Activated CD4-positive, alpha-beta memory T cell treated with anti-CD3 and anti-CD28 coated beads for 36 hours (primary cell): ENCODE measurements at regions of chr15 and their contacts with region 1.

Region 1: GRCh38 chr15:74540761-74541493 is at the start of gene ARID3B:
- DNase-seq: peak; percentile 99
- H3K4me3 Mint-ChIP-seq: peak within 1 kb of the TSS; percentile 99
- H3K27ac Mint-ChIP-seq: peak within 1 kb of the TSS; percentile 95
- H3K4me1 Mint-ChIP-seq: peaks cover 48% of the 10 kb centered on the region
- H3K27me3 Mint-ChIP-seq: no peaks in the 10 kb centered on the region
- total RNA-seq, gene ARID3B: 27.3 to 28.6 TPM

Region 2: GRCh38 chr15:73991726-73992593 is 549.0 kb before region 1 on chr15 and contains the start of gene STOML1:
- CTCF ChIA-PET with region 1: no interaction called
- POLR2A ChIA-PET with region 1: interaction called, 3 read pairs
- intact Hi-C with region 1: loop called (anchors 5 kb)
- DNase-seq: peak; percentile 97
- H3K4me3 Mint-ChIP-seq: peak within 1 kb of the TSS; percentile 80
- H3K27ac Mint-ChIP-seq: peak within 1 kb of the TSS; percentile 70
- H3K4me1 Mint-ChIP-seq: peaks cover 30% of the 10 kb centered on the region
- H3K27me3 Mint-ChIP-seq: no peaks in the 10 kb centered on the region
- total RNA-seq, gene STOML1: 7.1 to 10.1 TPM

Region 3: GRCh38 chr15:74011610-74012009 is 529.3 kb before region 1 on chr15:
- CTCF ChIA-PET with region 1: no interaction called
- POLR2A ChIA-PET with region 1: no interaction called
- intact Hi-C with region 1: loop called (anchors 5 kb)
- DNase-seq: no peak
- H3K4me3 Mint-ChIP-seq: no peak overlapping the region
- H3K27ac Mint-ChIP-seq: no peak overlapping the region
- H3K4me1 Mint-ChIP-seq: peaks cover 51% of the 10 kb centered on the region
- H3K27me3 Mint-ChIP-seq: no peaks in the 10 kb centered on the region

Region 4: GRCh38 chr15:74402873-74403587 is 137.9 kb before region 1 on chr15:
- CTCF ChIA-PET with region 1: interaction called, 4 read pairs
- POLR2A ChIA-PET with region 1: interaction called, 8 read pairs
- intact Hi-C with region 1: loop called (anchors 2 kb)
- DNase-seq: peak; percentile 95
- H3K4me3 Mint-ChIP-seq: peak overlapping the region; percentile 28
- H3K27ac Mint-ChIP-seq: peak overlapping the region; percentile 85
- H3K4me1 Mint-ChIP-seq: peaks cover 73% of the 10 kb centered on the region
- H3K27me3 Mint-ChIP-seq: no peaks in the 10 kb centered on the region

Region 5: GRCh38 chr15:74552773-74553441 is 12.0 kb after region 1 on chr15:
- CTCF ChIA-PET with region 1: interaction called, 5 read pairs
- POLR2A ChIA-PET with region 1: interaction called, 16 read pairs
- intact Hi-C with region 1: no loop called
- DNase-seq: no peak
- H3K4me3 Mint-ChIP-seq: no peak overlapping the region
- H3K27ac Mint-ChIP-seq: peak overlapping the region; percentile 58
- H3K4me1 Mint-ChIP-seq: peaks cover 42% of the 10 kb centered on the region
- H3K27me3 Mint-ChIP-seq: no peaks in the 10 kb centered on the region

Region 6: GRCh38 chr15:74598126-74598842 is 57.4 kb after region 1 on chr15:
- CTCF ChIA-PET with region 1: interaction called, 5 read pairs
- POLR2A ChIA-PET with region 1: interaction called, 3 read pairs
- intact Hi-C with region 1: loop called (anchors 1 kb)
- DNase-seq: peak; percentile 95
- H3K4me3 Mint-ChIP-seq: peak overlapping the region; percentile 96
- H3K27ac Mint-ChIP-seq: peak overlapping the region; percentile 94
- H3K4me1 Mint-ChIP-seq: peaks cover 20% of the 10 kb centered on the region
- H3K27me3 Mint-ChIP-seq: no peaks in the 10 kb centered on the region

Region 7: DNA sequence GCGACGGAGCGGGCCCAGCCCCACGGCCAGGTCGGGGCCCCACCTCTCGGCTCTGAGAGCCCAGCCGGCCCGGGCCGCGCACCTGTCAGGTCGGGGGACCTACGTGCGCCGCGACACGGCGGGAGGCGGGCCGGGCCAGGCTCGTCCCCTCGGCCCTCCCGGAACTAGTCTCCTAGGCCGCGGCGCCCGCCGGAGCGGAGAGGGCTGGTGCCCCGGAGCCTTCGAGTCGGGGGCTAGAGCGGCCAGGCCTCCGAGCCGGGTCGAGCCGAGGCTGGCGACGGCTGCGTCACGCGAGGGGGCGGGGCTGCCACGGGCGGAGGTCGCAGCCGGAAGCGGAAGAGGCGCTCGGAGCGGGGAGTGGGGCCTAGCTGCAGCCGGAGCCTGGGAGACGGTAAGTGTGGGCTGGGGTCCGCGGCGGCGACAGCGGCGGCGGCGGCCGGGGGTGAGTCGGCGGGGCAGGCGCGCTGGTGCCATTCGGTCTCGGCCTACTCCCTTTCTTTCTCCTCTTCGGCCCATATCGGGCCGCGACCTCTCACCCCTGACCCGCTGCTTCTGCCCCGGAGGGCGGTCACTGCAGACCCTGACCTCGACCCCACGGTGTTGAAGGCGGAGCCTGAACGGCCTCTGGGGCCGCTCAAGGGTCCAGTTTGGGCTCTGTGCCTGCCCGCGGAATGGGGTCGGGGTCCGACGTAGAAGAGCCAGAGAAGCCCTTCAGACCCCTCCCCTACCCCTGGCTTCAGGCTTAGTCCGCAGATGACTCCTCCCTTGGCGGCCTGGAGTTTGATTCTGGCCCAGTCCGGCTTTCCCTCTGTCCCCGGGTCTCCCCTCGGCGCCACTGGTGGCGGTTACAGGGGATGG is 74.8 kb after region 1 on chr15 and contains the start of gene CLK3:
- CTCF ChIA-PET with region 1: interaction called, 8 read pairs
- POLR2A ChIA-PET with region 1: interaction called, 33 read pairs
- intact Hi-C with region 1: loop called (anchors 1 kb)
- DNase-seq: peak; percentile 97
- H3K4me3 Mint-ChIP-seq: peak within 1 kb of the TSS; percentile 91
- H3K27ac Mint-ChIP-seq: peak within 1 kb of the TSS; percentile 94
- H3K4me1 Mint-ChIP-seq: peaks cover 35% of the 10 kb centered on the region
- H3K27me3 Mint-ChIP-seq: no peaks in the 10 kb centered on the region
- total RNA-seq, gene CLK3: 118 to 124 TPM